ENCODE measurements at regions of chr19 and their contacts with region 1.

Region 1: DNA sequence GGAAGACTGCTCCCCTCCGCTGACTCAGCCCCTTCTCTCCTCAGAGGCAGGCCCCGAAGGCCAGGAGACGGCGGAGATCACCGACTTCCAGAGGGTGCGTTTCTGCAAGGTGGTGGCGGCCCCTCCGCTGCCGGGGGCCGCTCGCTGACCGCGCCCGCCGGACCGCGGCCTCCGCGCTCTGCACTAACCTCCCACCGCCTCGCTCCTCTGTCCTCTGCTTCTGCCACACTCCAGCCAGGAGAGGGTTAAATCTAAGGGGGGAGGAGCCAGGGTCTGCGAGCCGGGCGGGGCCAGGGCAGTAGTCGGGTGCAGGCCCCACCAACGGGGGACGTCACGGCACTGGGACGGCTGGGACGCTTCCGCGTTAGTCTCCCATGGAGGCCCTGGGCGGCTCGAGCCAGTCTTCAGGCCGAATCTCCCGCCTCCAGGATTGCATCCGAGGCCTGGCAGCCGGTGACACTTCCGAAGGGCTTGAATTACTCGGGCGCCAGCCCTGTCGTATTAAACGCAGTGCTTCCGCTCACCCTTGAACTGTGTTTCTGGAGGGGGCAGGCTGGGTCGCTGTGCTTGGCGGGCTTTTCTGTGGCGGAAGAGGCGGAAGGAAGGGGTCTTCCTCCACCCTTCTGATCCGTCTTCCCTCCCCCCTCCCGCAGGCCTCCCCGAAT is 1.2 kb upstream of the INAFM1 start:
- DNase-seq: peak; percentile 93
- ATAC-seq: peak; percentile 63
- H3K4me3 Mint-ChIP-seq: peak overlapping the region; percentile 91
- H3K27ac Mint-ChIP-seq: peak overlapping the region; percentile 99
- H3K4me1 Mint-ChIP-seq: peaks cover 16% of the 10 kb centered on the region
- H3K27me3 Mint-ChIP-seq: peaks cover 18% of the 10 kb centered on the region
- CTCF ChIP-seq: no peak

Region 2: GRCh38 chr19:47161876-47162489 is 111.5 kb before region 1 on chr19:
- CTCF ChIA-PET with region 1: no interaction called
- POLR2A ChIA-PET with region 1: no interaction called
- DNase-seq: no peak
- ATAC-seq: no peak
- H3K4me3 Mint-ChIP-seq: no peak overlapping the region
- H3K27ac Mint-ChIP-seq: no peak overlapping the region
- H3K4me1 Mint-ChIP-seq: peaks cover 27% of the 10 kb centered on the region
- H3K27me3 Mint-ChIP-seq: no peaks in the 10 kb centered on the region
- CTCF ChIP-seq: no peak

Region 3: DNA sequence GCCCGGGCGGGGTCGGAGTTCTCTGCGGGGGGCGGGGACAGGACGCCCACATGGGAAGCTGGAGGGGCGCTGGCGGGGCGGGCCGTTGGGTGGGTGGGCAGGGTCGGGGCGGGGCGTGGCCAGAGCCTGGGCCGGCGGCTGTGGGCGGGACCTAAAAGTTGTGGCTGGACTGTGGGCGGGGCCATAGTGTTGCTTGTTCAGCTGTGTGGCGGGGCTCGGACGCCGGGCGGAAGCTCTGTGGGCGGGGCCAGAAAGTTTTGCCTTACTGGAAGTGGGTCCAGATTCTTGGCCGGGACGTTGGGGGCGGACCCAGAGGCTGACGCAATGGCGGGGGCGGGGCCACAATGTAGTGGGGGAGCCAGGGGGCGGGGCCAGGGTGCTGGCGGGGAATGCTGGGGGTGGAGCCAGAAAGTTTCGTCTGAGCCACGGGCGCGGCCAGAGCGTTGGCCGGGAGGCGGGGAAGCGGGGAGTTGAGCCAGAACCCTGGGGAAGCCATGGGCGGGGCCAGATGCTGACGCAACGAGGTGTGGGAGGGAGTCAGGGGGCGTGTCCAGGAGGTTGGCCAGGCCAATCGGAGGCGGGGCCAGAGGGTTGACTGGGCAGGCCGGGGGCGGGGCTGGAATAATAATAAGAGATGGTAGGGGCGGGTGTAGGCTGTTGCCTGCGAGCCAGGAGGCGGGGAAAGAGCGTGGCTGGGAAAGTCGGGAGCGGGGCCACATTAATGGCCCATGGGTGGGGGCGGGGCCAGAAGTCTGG is 16.6 kb before region 1 on chr19:
- CTCF ChIA-PET with region 1: interaction called, 19 read pairs
- POLR2A ChIA-PET with region 1: interaction called, 46 read pairs
- DNase-seq: peak; percentile 100
- ATAC-seq: peak; percentile 86
- H3K4me3 Mint-ChIP-seq: peak overlapping the region; percentile 87
- H3K27ac Mint-ChIP-seq: peak overlapping the region; percentile 97
- H3K4me1 Mint-ChIP-seq: peaks cover 12% of the 10 kb centered on the region
- H3K27me3 Mint-ChIP-seq: peaks cover 19% of the 10 kb centered on the region
- CTCF ChIP-seq: no peak

Region 4: DNA sequence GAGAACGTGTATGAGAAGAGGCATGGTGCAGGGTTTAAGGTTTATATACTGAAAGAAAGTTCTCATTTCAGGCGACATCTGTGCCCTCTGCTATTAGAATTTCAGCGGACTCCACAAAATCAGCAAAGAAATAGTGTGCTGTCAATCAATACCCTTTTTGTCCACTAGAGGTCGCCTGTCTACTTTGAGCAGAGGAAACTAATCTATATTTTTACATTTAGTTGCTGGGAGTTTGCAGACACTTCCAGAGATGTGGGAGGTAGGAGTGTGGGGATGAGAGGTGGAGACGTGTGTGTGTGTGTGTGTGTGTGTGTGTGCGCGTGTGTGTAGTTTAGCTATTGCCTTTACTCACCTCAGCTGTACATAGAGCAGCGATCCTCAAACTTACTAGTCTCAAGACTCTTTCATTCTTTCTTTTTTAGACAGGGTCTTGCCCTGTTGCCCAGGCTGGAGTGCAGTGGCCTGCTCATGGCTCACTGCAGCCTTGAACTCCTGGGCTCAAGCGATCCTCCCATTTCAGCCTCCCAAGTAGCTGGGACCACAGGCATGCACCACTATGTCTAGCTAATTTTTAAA is 11.0 kb after region 1 on chr19:
- CTCF ChIA-PET with region 1: interaction called, 14 read pairs
- POLR2A ChIA-PET with region 1: interaction called, 3 read pairs
- DNase-seq: no peak
- ATAC-seq: peak; percentile 54
- H3K4me3 Mint-ChIP-seq: no peak overlapping the region
- H3K27ac Mint-ChIP-seq: no peak overlapping the region
- H3K4me1 Mint-ChIP-seq: peaks cover under 1% of the 10 kb centered on the region
- H3K27me3 Mint-ChIP-seq: no peaks in the 10 kb centered on the region
- CTCF ChIP-seq: peak; percentile 85

Region 5: GRCh38 chr19:47398707-47399597 is 125.5 kb after region 1 on chr19:
- CTCF ChIA-PET with region 1: no interaction called
- POLR2A ChIA-PET with region 1: no interaction called
- DNase-seq: peak; percentile 33
- ATAC-seq: peak; percentile 77
- H3K4me3 Mint-ChIP-seq: peak overlapping the region; percentile 13
- H3K27ac Mint-ChIP-seq: peak overlapping the region; percentile 96
- H3K4me1 Mint-ChIP-seq: peaks cover 28% of the 10 kb centered on the region
- H3K27me3 Mint-ChIP-seq: peaks cover under 1% of the 10 kb centered on the region; the same call in 1 of the 2 replicates
- CTCF ChIP-seq: no peak

Measured in WTC11 (cell line).